ENCODE measurements at regions of chr1 and their contacts with region 1.

Region 1: GRCh38 chr1:244796718-244797406 is 38.6 kb upstream of the COX20 start:
- DNase-seq: no peak
- H3K4me3 ChIP-seq: no peak overlapping the region
- H3K27ac ChIP-seq: no peak overlapping the region
- H3K4me1 ChIP-seq: peaks cover 0 to 7% (median 2%) of the 10 kb centered on the region in 4 donors
- H3K27me3 ChIP-seq: no peaks in the 10 kb centered on the region
- CTCF ChIP-seq: peak; percentile 86 to 95 (median 87)
- EP300 ChIP-seq: no peak
- POLR2A ChIP-seq: no peak

Region 2: DNA sequence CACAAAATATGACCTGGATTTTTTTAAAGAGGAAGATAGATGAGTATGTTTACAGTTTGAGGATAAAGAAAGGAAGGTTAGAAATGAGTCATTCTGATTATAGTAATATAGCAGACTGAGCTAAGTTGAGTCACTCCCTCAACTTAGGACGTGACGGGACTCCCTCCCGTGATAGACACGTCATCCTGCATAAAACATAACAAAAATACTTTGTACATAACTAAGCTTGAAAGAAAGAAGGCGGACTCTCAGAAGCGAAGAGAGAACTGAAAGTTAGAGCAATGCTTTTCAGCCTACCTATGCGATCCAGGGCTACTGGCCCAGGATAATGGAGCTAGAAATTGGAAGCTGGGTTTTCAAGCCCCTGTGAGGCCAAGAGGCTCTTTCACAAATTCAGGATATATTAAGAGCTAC is 196.9 kb before region 1 on chr1:
- intact Hi-C with region 1: loop called (anchors 1 kb)
- DNase-seq: no peak
- H3K4me3 ChIP-seq: no peak overlapping the region
- H3K27ac ChIP-seq: peak overlapping the region in 2 of 4 donors; percentile 23 to 48
- H3K4me1 ChIP-seq: no peaks in the 10 kb centered on the region
- H3K27me3 ChIP-seq: no peaks in the 10 kb centered on the region
- CTCF ChIP-seq: no peak
- EP300 ChIP-seq: no peak
- POLR2A ChIP-seq: no peak

Region 3: DNA sequence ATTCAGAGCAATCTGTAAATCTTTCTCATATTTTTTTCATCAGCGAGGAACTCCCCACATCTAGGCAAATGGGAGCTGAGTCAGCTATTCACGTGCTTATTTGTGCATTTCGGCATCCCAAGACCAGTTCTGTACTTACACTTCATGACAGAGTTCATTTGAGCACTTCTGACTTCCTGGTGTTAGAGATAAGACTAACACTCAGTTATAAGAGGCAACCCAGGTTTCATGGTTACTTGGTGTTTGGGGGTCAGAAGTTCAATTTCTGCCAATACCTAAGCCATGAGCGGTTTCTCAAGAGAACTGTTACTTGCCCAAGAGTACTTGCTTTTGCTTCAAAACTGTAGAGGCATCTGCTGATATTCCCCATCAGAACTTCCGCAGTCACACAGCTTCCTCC is 168.1 kb before region 1 on chr1:
- intact Hi-C with region 1: no loop called
- DNase-seq: no peak
- H3K4me3 ChIP-seq: no peak overlapping the region
- H3K27ac ChIP-seq: no peak overlapping the region
- H3K4me1 ChIP-seq: no peaks in the 10 kb centered on the region
- H3K27me3 ChIP-seq: no peaks in the 10 kb centered on the region
- CTCF ChIP-seq: no peak
- EP300 ChIP-seq: no peak
- POLR2A ChIP-seq: no peak

Region 4: DNA sequence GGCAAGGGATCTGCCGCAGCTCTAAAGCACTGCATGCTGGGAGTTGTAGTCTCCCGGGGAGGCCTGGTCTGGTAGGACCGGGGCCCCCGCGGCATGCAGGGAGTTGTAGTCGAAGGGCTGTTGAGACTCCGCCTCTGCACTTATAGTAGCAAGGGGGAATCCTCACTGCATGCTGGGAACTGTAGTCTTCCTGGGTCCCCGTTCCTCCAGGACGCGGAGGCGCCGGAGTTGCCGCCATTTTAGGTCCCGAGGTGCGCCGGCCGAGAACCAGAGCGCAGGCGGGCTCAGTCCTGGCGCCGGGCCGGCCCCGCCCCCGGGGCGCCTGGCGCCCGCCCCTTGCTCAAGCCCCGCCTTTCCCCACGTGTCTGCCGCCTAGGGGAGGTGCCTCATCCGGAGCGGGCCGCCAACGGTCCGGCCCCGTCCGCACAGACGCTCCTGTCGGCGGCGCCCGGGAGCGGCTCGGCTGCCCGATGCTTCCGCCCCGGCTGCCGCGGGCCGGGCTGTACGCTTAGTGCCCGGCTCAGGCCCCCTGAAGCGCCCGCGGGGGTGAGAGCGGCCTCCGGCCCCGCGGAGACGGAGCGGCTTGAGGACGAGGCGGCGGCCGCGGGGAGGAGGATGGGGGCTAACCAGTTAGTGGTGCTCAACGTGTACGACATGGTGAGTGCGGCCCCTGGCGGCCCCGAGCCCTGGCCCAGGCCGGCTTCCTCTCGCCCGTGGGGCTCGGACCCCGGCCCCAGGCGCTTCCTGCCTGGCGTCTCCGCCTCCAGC is 144.0 kb before region 1 on chr1 and contains the start of gene DESI2:
- intact Hi-C with region 1: loop called (anchors 1 kb)
- DNase-seq: peak; percentile 99
- H3K4me3 ChIP-seq: peak within 1 kb of the TSS; percentile 72 to 90 (median 78)
- H3K27ac ChIP-seq: peak within 1 kb of the TSS; percentile 95 to 97 (median 97)
- H3K4me1 ChIP-seq: peaks cover 34 to 49% (median 45%) of the 10 kb centered on the region in 4 donors
- H3K27me3 ChIP-seq: no peaks in the 10 kb centered on the region
- CTCF ChIP-seq: peak; percentile 52 to 57 (median 55)
- EP300 ChIP-seq: no peak
- POLR2A ChIP-seq: peak; percentile 95
- total RNA-seq, gene DESI2: 30.3 to 59.6 (median 31.4) TPM

Region 5: DNA sequence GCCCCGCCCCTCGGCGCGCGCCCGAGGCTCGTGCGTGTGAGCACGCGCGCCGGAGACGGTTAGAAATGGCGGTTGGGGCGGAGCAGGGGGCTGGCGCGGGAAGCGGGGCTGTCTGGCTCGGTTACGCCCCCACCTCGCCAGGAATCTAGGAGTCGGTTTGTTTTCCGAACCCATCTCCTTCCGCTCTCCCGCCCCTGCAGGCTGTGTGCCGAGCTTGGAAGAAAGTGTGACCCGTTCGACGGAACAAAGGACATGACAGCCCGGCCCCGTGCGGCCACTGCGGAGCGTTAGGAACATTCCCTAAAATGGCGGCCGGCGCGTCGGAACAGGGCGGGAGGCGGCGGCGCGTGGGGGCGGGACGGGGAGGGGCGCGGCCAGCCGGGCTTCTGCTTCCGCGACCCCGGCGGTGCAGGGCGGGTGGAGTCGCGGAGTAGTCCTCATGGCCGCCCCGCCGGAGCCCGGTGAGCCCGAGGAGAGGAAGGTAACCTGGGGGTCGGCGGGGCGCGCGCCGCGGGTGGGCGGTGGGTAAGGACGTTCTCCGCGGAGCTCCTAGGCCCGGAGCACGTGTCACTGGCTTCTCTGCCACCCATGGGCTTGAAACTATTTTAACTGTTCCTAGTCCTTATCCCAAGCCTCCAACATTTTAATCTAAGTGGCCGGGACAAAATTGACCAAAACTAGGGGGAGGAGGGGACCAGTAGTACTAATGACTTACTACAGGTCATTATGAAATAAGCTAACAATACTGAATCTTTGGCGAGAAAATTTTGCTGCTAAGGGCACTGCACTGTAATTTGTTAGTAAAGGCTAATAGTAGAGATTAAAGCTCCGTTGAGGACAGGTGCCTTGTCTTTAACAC is 38.6 kb after region 1 on chr1 and contains the start of gene COX20:
- intact Hi-C with region 1: no loop called
- DNase-seq: peak; percentile 97
- H3K4me3 ChIP-seq: peak within 1 kb of the TSS; percentile 75 to 86 (median 85)
- H3K27ac ChIP-seq: peak within 1 kb of the TSS; percentile 99 to 100 (median 100)
- H3K4me1 ChIP-seq: peaks cover 34 to 51% (median 50%) of the 10 kb centered on the region in 4 donors
- H3K27me3 ChIP-seq: no peaks in the 10 kb centered on the region
- CTCF ChIP-seq: no peak
- EP300 ChIP-seq: no peak
- POLR2A ChIP-seq: peak; percentile 23
- total RNA-seq, gene COX20: 74.8 to 125 (median 101) TPM

Measured in esophagus muscularis mucosa (tissue), 4 donors.